GM23248 (cell line): ENCODE measurements at regions of chr12 and their contacts with region 1.

Region 1: GRCh38 chr12:54207484-54208294 is 18.9 kb upstream of the SMUG1 start:
- DNase-seq: peak; percentile 70
- H3K4me3 ChIP-seq: no peak overlapping the region
- H3K27ac ChIP-seq: no peak overlapping the region
- H3K4me1 ChIP-seq: no peaks in the 10 kb centered on the region
- H3K27me3 ChIP-seq: no peaks in the 10 kb centered on the region; the same call in 1 of the 2 replicates

Region 2: DNA sequence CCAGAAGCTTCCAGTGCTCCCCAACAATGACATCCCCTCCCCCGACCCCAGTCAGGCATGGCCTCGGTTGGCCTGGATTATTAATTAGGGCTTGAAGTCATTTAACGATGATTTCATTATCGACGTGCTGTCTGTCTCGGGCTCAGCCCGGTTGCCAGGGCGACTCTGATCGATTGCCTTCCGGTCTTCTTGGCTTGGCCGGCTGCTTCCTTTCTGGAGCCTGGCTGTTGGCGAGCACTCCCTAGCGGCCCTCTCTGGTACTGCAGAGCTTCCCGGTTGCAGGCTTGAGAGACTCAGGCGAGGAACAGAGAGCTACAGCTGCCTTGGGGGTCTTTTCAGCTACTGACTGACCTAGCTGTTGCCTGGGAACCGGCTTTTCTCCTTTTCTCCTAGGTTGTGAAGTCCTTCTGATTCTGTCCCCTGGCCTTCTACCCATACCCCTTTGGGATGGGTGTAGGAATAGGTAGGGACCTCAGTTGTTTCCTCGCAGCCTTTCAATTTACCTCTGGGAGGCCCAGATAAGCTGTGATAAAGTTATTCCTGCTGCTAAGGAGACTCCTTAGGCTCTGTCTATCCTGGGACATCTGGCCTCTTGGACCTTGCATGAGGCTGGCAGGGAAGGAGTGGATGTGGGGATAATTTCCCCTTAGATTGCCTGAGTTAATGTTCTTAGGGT is 450.5 kb before region 1 on chr12:
- in situ Hi-C with region 1: loop called (anchors 10 kb)
- DNase-seq: peak; percentile 78
- H3K4me3 ChIP-seq: 0 out of 2 replicates have a peak overlapping the region, but pooled peaks have one; percentile 35
- H3K27ac ChIP-seq: no peak overlapping the region
- H3K4me1 ChIP-seq: no peaks in the 10 kb centered on the region
- H3K27me3 ChIP-seq: peaks cover 83% of the 10 kb centered on the region